ENCODE measurements at regions of chr13 and their contacts with region 1.

Region 1: GRCh38 chr13:95100525-95101433 is 200.5 kb downstream of the ABCC4 start:
- DNase-seq: peak; percentile 97
- ATAC-seq: peak; percentile 71
- H3K4me3 ChIP-seq: peak overlapping the region; percentile 39; the same call in 1 of the 2 replicates
- H3K27ac ChIP-seq: peak overlapping the region; percentile 100
- H3K4me1 ChIP-seq: peaks cover 37% of the 10 kb centered on the region
- H3K27me3 ChIP-seq: no peaks in the 10 kb centered on the region
- CTCF ChIP-seq: no peak

Region 2: DNA sequence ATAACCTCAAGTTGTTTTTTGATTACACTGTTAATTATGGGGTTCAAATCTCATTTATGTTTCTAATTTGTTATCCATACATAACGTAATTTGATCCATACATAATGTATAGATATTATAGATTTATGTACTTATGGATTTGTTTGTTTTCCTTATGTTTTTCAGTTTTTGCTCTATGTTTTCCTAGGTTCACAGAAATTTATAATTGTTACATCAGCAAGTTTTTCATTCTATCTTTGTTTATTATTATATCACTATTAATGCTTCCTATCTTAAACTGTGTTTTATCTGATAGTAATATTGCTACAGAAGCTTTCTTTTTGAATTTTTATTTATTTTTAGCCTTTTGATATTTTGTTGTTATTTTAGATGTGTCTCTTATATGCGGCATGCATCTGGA is 194.2 kb before region 1 on chr13:
- CTCF ChIA-PET with region 1: no interaction called
- POLR2A ChIA-PET with region 1: no interaction called
- intact Hi-C with region 1: no loop called
- DNase-seq: no peak
- ATAC-seq: no peak
- H3K4me3 ChIP-seq: no peak overlapping the region
- H3K27ac ChIP-seq: no peak overlapping the region
- H3K4me1 ChIP-seq: no peaks in the 10 kb centered on the region
- H3K27me3 ChIP-seq: peaks cover 9% of the 10 kb centered on the region; the same call in 1 of the 2 replicates
- CTCF ChIP-seq: no peak

Region 3: DNA sequence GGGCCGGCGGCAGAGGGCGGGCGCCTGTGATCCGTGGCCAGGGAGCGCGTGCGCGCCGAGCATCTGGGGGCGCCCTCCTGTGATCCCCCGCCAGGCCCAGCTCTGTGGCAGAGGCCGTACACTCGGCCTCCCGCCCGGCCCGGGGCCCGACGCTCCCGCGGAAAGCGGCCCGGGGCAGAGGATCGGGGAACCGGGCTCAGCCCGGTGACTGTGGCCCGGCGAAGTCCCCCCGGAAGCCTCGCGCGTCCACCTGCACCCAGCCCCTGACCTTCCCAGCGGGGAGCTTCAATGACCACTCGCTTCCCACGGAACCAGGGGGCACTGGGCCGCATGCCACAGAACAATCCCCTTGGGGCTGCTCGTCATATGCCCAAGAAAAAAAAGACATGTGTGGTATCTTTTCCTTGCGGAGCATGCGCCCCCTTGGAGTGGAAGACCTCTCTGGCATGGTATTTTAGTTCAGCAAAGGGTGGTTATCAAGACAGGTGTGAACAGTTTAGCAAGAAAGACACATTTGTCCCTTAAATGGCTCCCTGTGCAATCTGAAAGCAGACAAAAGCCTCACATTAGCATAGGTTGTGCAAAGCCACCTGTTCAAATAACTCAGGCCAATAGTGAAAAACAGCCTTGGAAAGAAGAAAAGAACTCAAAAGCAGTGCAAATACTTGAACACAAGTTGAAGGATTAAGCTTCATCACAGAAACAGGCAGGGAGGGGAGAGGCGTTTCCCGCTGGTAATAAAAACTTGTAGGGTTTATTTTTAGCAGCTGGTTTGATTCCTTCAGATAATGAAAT is 97.6 kb before region 1 on chr13:
- CTCF ChIA-PET with region 1: no interaction called
- POLR2A ChIA-PET with region 1: no interaction called
- intact Hi-C with region 1: loop called (anchors 5 kb)
- DNase-seq: no peak
- ATAC-seq: no peak; the same call in 1 of the 2 replicates
- H3K4me3 ChIP-seq: no peak overlapping the region
- H3K27ac ChIP-seq: no peak overlapping the region
- H3K4me1 ChIP-seq: peaks cover 5% of the 10 kb centered on the region; the same call in 1 of the 2 replicates
- H3K27me3 ChIP-seq: no peaks in the 10 kb centered on the region
- CTCF ChIP-seq: no peak

Region 4: GRCh38 chr13:95023405-95023804 is 77.4 kb before region 1 on chr13:
- CTCF ChIA-PET with region 1: no interaction called
- POLR2A ChIA-PET with region 1: no interaction called
- intact Hi-C with region 1: loop called (anchors 1 kb)
- DNase-seq: peak; percentile 77
- ATAC-seq: peak; percentile 46
- H3K4me3 ChIP-seq: no peak overlapping the region
- H3K27ac ChIP-seq: peak overlapping the region; percentile 99
- H3K4me1 ChIP-seq: peaks cover 48% of the 10 kb centered on the region
- H3K27me3 ChIP-seq: no peaks in the 10 kb centered on the region
- CTCF ChIP-seq: no peak

Region 5: GRCh38 chr13:95115525-95115924 is 14.7 kb after region 1 on chr13:
- CTCF ChIA-PET with region 1: no interaction called
- POLR2A ChIA-PET with region 1: interaction called, 29 read pairs
- intact Hi-C with region 1: loop called (anchors 1 kb)
- DNase-seq: peak; percentile 93
- ATAC-seq: peak; percentile 91
- H3K4me3 ChIP-seq: peak overlapping the region; percentile 34
- H3K27ac ChIP-seq: peak overlapping the region; percentile 100
- H3K4me1 ChIP-seq: peaks cover 71% of the 10 kb centered on the region
- H3K27me3 ChIP-seq: no peaks in the 10 kb centered on the region
- CTCF ChIP-seq: no peak

Region 6: DNA sequence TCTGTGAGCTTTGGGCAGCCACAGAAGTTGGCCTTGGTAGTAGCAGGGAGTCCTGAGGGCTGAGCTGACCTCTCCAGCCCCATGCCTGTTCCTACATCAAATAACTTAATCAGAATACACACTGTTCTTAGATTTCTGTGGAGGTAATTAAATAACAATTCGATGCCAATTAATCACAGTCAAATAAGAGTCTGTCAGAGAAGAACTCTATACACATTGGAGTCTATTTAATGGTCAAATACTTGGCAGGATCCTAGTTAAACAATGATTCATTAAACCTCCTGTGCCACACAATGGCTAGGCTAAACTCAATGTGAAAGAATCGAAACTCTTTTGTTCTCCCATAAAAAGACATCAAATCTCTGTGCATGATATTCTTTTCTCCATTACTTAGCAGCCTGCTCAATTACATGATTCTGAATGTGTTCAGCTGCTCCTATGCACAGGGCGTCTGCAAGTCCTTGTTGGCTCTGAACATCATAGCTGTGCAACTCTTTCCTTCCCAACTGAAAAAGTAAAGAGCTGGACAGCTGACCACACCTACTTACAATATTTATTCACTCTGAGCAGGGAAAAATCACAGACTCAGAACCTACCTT is 27.4 kb after region 1 on chr13:
- CTCF ChIA-PET with region 1: no interaction called
- POLR2A ChIA-PET with region 1: no interaction called
- intact Hi-C with region 1: loop called (anchors 1 kb)
- DNase-seq: peak; percentile 83
- ATAC-seq: peak; percentile 88
- H3K4me3 ChIP-seq: peak overlapping the region; percentile 53
- H3K27ac ChIP-seq: peak overlapping the region; percentile 98
- H3K4me1 ChIP-seq: peaks cover 45% of the 10 kb centered on the region
- H3K27me3 ChIP-seq: no peaks in the 10 kb centered on the region
- CTCF ChIP-seq: no peak

Region 7: DNA sequence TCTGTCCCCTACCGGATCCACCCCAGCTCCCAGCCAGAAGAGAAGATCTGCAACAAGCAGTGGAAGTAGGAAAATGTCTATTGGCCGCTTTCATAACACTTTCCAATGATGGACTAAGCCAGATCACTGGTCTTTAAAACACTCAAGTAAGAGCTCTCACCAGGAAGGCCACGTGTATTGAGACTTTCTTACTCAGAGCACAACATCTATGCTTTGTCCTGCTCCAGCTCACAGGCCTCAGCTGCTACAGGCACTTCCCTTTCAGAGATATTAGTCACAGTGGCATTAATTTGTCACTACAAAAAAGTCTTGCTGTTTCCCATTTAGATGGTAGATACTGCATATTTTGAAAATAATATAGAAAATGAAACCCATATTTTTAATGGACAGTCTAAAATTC is 36.3 kb after region 1 on chr13:
- CTCF ChIA-PET with region 1: no interaction called
- POLR2A ChIA-PET with region 1: interaction called, 11 read pairs
- intact Hi-C with region 1: no loop called
- DNase-seq: peak; percentile 37
- ATAC-seq: peak; percentile 67
- H3K4me3 ChIP-seq: no peak overlapping the region
- H3K27ac ChIP-seq: peak overlapping the region; percentile 19
- H3K4me1 ChIP-seq: peaks cover 9% of the 10 kb centered on the region; the same call in 1 of the 2 replicates
- H3K27me3 ChIP-seq: no peaks in the 10 kb centered on the region
- CTCF ChIP-seq: no peak

Measured in PC-3 (cell line).